ENCODE measurements at regions of chr18 and their contacts with region 1.

Region 1: GRCh38 chr18:63329431-63330145 is 10.0 kb upstream of the BCL2 start:
- DNase-seq: no peak
- H3K4me3 ChIP-seq: no peak overlapping the region
- H3K27ac ChIP-seq: no peak overlapping the region
- H3K4me1 ChIP-seq: no peaks in the 10 kb centered on the region
- H3K27me3 ChIP-seq: no peaks in the 10 kb centered on the region

Region 2: DNA sequence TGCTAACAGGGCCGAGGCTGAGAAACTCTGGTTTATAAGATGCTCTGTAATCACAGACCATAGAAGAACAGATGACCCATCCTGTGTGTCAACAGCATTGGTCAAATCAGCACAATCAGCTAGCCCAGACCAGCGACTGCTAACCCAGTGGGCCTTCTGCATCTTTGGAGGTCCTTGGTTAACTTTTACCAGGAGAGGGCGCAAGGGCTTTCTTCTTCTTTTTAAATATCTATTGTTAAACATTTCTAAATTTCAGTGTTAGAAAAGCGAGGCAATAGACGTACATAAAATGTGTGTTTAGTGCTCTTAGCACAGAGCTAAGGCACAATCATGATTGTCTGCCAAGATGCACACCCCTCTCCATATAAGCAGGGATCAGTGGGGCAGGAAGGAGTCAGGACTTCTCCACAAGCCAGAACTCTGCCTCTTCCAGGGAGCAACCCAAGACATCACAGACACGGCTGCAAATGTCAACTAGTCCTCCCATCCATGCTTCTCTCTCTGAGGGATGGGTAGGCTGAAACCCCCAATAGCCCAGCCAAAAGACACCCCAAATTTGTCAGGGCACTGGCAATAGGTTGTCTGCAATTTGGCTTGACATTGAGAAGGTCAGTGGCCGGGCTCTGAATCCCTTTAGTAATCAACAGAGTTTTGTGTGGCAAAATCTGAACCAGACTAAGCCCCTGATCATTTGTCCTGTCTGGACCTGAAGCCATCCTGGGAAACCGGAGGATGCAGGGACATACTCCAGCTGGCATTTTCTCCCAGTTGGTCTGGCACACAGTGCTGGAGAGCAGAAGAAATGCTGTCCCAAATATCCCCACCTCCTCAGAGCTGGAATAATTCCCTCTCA is 198.3 kb before region 1 on chr18:
- in situ Hi-C with region 1: loop called (anchors 5 kb)
- DNase-seq: peak; percentile 76
- H3K4me3 ChIP-seq: no peak overlapping the region
- H3K27ac ChIP-seq: no peak overlapping the region
- H3K4me1 ChIP-seq: no peaks in the 10 kb centered on the region
- H3K27me3 ChIP-seq: no peaks in the 10 kb centered on the region

Measured in GM23248 (cell line).